GM18951 (cell line): ENCODE measurements at regions of chr20 and their contacts with region 1.

Region 1: DNA sequence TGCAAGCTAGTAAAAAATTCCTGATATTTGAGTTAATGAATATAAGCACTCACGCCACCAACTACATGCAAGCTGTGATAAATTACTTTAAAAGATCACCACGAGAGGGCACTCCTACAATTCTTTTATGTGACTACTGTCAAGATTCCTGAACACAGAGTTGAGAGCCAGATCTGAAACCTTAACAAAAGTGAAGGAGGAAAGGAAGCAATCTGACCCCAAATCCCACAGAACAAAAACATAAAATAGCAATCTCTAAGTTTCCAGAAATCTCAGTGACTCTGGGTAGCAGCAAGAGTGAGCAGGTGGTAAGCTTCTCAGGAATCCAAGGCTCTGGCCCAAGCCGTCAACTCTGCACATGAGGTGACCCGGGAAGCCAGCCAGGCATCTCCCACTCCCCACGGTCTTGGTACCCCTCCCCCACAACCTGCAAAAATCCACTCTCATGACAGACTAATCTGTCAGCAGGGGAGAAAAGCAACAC is 55.1 kb downstream of the STAU1 start:
- POLR2A ChIP-seq: no peak

Region 2: GRCh38 chr20:49046087-49046900 is 86.7 kb before region 1 on chr20 and contains the start of gene CSE1L:
- in situ Hi-C with region 1: no loop called
- POLR2A ChIP-seq: peak; percentile 83

Region 3: DNA sequence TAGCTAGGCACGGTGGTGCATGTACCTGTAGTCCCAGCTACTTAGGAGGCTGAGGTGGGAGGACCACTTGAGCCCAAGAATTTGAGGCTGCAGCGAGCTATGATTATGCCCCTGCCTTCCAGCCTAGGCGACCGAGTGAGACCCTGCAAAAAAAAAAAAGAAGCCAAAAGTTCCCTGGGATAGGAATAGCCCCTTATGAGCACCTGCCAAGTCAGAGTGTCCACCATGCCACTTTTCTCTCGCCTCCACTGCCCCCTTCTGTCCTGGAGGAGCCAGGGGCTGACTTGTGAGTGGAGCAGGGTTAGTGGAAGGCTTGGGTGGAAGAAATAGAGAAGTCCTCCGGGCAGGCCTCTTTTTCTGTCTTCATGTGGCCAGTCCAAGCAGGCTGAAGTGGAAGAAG is 74.0 kb after region 1 on chr20:
- in situ Hi-C with region 1: loop called (anchors 5 kb)
- POLR2A ChIP-seq: no peak